Activated T-helper 1 cell treated with anti-CD3 and anti-CD28 coated beads, Interleukin-12 subunit alpha, Interleukin-12 subunit beta, Interleukin-2, Interleukin-4 antibody, amounts not matched to agents 30 ng/mL and 10 ng/mL and 1 ng/mL, durations not matched to agents 14 hours and 24 hours and 36 hours (primary cell): ENCODE measurements at regions of chr1 and their contacts with region 1.

Region 1: DNA sequence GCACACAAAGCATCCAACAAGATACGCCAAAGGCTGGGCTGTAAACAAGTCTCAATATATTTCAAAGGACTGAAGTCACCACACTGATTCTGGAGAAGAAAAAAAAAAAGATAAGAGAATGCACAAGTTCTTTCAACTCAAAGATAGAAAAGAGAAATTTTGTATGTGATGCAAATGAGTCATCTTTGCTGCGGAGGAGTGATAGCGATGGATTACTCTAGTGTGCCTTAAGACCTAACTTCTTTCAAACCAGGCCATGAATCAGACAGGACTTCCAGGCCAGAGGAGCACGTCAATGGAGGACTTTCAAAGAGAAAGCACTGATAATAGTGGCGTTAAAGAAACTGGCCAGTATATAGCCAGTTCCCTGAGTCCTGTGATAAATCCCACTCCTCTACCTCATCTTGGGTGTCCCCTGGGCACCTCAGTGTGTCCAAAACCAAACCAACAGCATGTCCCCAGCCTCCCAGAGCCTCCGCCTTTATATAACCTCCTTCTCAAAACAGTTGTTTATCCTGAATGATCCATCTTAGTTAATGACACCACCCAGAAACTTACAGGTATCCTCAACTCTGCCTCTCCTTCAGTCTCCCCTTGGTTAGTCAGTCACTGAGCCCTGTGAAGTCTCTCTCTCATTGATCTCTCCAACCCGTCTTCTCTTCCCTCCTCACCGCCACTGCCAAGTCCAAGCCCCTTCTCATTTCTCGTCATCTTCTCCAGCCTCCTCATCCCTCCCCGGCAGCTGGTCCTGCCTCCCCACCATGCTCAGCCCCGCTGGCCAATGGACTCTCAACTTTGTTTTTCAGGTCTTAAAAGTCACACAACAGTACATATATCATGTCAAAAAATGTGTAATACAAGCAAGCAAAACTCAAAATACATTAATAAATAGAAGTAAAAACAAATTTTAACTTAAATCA is 47.2 kb upstream of the IFFO2 start:
- DNase-seq: no peak
- H3K4me3 Mint-ChIP-seq: no peak overlapping the region
- H3K27ac Mint-ChIP-seq: peak overlapping the region; percentile 59
- H3K4me1 Mint-ChIP-seq: peaks cover 19% of the 10 kb centered on the region
- H3K27me3 Mint-ChIP-seq: peaks cover 6% of the 10 kb centered on the region

Region 2: DNA sequence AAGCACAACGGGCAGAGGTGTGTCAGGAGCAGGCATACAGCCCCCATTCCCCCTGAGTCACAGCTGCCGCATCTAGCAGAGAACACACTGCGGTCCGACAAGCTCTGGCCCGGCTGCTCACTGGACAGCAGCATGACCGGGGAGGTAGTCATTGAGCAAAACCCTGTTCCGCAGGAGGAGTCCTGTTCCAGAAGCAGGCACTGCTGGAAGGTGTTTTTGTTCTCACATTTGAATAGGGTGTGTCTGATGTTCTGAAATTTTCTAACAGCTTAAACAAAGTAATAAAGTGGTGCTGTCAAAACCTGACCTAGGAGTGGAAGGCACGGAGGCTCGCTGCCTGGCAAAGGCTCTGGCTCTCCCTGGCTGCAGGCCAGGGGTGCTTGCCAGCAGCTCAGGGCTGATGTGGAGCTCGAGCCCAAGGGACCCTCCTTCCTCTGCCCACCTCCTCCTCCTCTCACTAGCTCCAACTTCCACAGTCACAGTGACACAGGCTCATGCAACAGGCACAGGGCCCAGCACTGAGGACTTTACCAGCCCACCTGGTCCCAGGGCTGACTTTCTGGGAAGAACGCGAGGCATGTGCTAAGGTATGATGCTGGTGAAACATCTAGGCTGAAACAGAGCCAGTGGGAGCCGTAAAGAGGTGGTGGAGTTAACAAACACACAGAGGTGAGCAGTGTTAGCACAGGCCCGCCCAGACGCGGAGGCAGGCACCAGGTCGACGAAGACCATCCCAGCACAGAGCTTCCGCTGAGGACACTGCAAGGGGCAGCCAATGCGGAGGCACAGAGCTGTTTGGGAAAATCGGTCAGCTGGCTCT is 71.5 kb after region 1 on chr1:
- intact Hi-C with region 1: loop called (anchors 2 kb)
- DNase-seq: no peak
- H3K4me3 Mint-ChIP-seq: peak overlapping the region; percentile 53
- H3K27ac Mint-ChIP-seq: peak overlapping the region; percentile 61
- H3K4me1 Mint-ChIP-seq: peaks cover 34% of the 10 kb centered on the region
- H3K27me3 Mint-ChIP-seq: peaks cover 4% of the 10 kb centered on the region

Region 3: DNA sequence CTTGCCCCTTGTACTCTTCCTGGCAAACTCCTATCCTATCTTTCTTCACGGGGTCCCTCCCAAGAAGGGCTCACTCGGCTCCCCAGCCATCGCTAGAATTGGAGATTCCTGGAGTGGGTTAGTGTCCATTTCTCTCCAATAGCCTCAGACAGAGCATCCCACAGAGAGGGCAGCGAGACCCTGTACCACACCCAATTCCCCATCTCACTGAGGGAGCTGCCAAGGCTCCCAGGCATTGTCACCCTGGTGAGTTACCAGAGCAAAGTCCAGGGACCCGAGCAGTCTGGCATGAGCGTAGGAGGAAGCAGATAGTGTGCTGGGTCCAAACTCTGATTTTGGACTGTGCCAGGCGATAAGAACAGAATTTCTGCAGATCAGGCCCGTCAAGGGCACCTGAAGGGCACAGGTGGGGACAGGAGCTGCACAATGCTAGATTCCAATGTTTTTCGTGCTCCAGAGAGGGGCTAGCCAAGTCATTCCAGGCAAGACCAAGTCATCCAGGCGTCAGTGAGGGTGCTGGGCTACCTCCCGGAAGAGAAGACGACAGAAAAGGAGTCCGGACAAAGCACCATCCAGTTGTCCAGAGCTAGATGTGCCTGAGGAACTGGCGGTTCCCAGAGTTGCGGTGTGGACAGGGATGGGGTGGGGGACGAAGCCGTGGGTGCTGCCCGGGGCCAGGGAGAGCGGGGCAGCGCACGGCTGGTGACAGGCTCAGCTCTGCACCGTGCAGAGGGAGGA is 269.6 kb after region 1 on chr1:
- intact Hi-C with region 1: no loop called
- DNase-seq: no peak
- H3K4me3 Mint-ChIP-seq: no peak overlapping the region
- H3K27ac Mint-ChIP-seq: no peak overlapping the region
- H3K4me1 Mint-ChIP-seq: no peaks in the 10 kb centered on the region
- H3K27me3 Mint-ChIP-seq: peaks cover 12% of the 10 kb centered on the region